ENCODE measurements at regions of chr16 and their contacts with region 1.

Region 1: DNA sequence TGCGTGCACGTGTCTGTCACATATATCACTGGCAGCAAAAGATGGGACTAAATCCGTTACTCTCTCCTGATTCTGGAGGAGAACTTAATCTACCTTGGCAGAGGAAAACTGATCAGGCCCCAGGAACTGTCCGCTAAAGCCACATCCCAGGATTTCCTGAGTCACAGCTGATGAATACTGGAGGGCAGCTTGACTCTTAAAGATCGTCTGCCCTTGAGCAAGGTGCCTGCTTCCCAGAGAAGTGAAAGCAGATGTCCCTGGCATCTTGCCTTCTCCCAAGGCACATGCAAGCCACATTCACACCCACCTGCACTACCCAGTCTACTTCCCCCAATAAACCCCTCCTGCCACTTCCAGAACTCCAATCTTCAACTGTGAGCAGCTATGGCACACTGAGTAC is 99.8 kb downstream of the CPPED1 start:
- DNase-seq: no peak
- H3K4me3 ChIP-seq: no peak overlapping the region
- H3K27ac ChIP-seq: no peak overlapping the region
- H3K4me1 ChIP-seq: no peaks in the 10 kb centered on the region
- H3K27me3 ChIP-seq: no peaks in the 10 kb centered on the region
- CTCF ChIP-seq: no peak
- EP300 ChIP-seq: no peak
- POLR2A ChIP-seq: no peak

Region 2: DNA sequence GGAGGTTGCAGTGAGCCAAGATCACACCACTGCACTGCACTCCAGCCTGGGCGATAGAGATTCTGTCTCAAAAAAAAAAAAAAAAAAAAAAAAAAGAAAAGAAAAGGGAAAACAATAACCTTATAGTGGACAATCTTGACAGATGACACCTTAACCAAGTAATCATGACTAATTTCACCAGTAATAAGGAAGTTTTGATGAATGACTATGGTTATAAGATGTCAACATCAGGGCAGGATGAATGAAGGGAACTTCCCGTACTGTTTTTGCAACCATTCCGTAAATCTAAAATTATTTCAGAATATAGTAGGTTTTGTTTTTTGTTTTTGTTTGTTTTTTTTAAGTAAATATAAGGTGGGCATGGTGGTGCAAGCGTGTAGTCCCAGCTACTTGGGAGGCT is 811.2 kb before region 1 on chr16:
- intact Hi-C with region 1: no loop called
- DNase-seq: no peak
- H3K4me3 ChIP-seq: no peak overlapping the region
- H3K27ac ChIP-seq: no peak overlapping the region
- H3K4me1 ChIP-seq: no peaks in the 10 kb centered on the region
- H3K27me3 ChIP-seq: no peaks in the 10 kb centered on the region
- CTCF ChIP-seq: no peak
- EP300 ChIP-seq: no peak
- POLR2A ChIP-seq: no peak

Region 3: DNA sequence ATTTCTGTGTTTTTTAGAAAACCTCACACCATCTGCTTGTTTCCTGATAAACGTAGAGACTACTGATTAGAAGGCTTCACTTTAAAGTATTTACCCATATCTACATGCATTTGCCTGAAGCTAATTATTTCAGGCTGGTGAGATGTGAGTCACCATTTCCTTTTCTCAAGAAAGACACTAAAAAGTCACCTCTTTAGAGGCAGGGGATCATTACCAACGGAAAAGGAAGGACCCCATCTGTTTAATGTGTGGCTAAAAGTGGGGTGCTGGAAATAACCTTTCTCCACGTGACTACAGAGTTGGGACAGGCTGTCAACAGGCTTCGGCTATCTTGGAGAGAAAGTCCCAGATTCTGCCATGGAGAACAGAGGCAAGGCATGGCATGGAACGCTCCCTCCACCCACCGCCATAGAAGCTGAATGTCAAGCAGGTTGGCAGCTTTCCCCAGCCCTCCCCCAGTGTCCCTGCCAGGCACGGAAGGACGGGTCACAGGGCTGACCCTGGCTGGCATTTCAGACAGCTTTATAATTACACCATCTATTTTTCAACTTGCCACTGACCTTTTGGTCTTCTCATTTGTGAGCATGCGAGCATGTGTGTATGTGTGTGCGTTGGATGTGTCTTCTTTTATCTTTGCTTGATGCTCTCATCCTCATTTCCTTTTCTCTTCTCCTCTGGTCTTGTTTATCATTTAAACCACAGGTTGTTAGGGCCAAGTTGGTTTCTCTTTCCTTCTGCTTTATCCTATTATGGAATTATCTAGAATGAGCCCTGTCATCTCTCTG is 57.3 kb before region 1 on chr16:
- intact Hi-C with region 1: loop called in 1 of 4 experiments (anchors 10 kb)
- DNase-seq: no peak
- H3K4me3 ChIP-seq: no peak overlapping the region
- H3K27ac ChIP-seq: no peak overlapping the region
- H3K4me1 ChIP-seq: no peaks in the 10 kb centered on the region
- H3K27me3 ChIP-seq: no peaks in the 10 kb centered on the region
- CTCF ChIP-seq: no peak
- EP300 ChIP-seq: no peak
- POLR2A ChIP-seq: no peak

Measured in ovary (tissue), 10 donors.